MCF 10A (cell line): ENCODE measurements at regions of chr1 and their contacts with region 1.

Region 1: DNA sequence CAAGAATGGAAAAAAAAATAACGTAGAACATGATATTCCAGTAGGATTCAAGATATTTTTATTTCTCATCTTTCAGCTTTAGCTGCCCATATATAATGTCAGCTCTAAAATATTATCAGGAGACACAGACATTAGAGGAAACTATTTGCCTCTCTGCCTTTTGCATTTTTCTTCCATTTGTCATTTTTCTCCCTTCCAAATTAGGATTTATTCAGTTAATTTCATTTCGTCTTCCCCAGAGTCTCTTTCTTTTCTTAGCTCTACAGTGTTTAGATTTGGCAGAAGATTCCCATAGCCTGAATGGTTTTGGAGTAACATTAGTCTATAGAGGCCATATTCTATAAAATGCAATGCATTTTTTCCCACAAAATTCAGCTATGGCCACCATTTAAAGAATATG is 5.1 kb upstream of the ENAH start:
- DNase-seq: no peak
- H3K4me3 Mint-ChIP-seq: no peak overlapping the region
- H3K27ac Mint-ChIP-seq: peak overlapping the region; percentile 71
- H3K4me1 Mint-ChIP-seq: peaks cover 40% of the 10 kb centered on the region
- H3K27me3 Mint-ChIP-seq: no peaks in the 10 kb centered on the region
- CTCF ChIP-seq: no peak

Region 2: GRCh38 chr1:225670806-225671733 is 13.0 kb after region 1 on chr1:
- CTCF ChIA-PET with region 1: interaction called, 4 read pairs
- POLR2A ChIA-PET with region 1: interaction called, 18 read pairs
- intact Hi-C with region 1: no loop called
- DNase-seq: peak; percentile 66
- H3K4me3 Mint-ChIP-seq: no peak overlapping the region
- H3K27ac Mint-ChIP-seq: no peak overlapping the region
- H3K4me1 Mint-ChIP-seq: peaks cover 14% of the 10 kb centered on the region
- H3K27me3 Mint-ChIP-seq: no peaks in the 10 kb centered on the region
- CTCF ChIP-seq: no peak

Region 3: GRCh38 chr1:225794954-225795353 is 136.9 kb after region 1 on chr1:
- CTCF ChIA-PET with region 1: no interaction called
- POLR2A ChIA-PET with region 1: no interaction called
- intact Hi-C with region 1: no loop called
- DNase-seq: no peak
- H3K4me3 Mint-ChIP-seq: no peak overlapping the region
- H3K27ac Mint-ChIP-seq: no peak overlapping the region
- H3K4me1 Mint-ChIP-seq: no peaks in the 10 kb centered on the region
- H3K27me3 Mint-ChIP-seq: no peaks in the 10 kb centered on the region
- CTCF ChIP-seq: no peak

Region 4: GRCh38 chr1:226009650-226010044 is 351.6 kb after region 1 on chr1:
- CTCF ChIA-PET with region 1: no interaction called
- POLR2A ChIA-PET with region 1: no interaction called
- intact Hi-C with region 1: no loop called
- DNase-seq: no peak
- H3K4me3 Mint-ChIP-seq: no peak overlapping the region
- H3K27ac Mint-ChIP-seq: no peak overlapping the region
- H3K4me1 Mint-ChIP-seq: peaks cover 5% of the 10 kb centered on the region
- H3K27me3 Mint-ChIP-seq: peaks cover 27% of the 10 kb centered on the region
- CTCF ChIP-seq: no peak